PC-3 (cell line): ENCODE measurements at regions of chr5 and their contacts with region 1.

Region 1: GRCh38 chr5:151315998-151316597 is 12.5 kb upstream of the SLC36A3 start:
- DNase-seq: peak; percentile 93
- ATAC-seq: peak; percentile 89
- H3K4me3 ChIP-seq: no peak overlapping the region
- H3K27ac ChIP-seq: no peak overlapping the region
- H3K4me1 ChIP-seq: no peaks in the 10 kb centered on the region
- H3K27me3 ChIP-seq: no peaks in the 10 kb centered on the region
- CTCF ChIP-seq: peak; percentile 96

Region 2: GRCh38 chr5:151126199-151126645 is 189.9 kb before region 1 on chr5:
- CTCF ChIA-PET with region 1: interaction called, 11 read pairs
- POLR2A ChIA-PET with region 1: no interaction called
- intact Hi-C with region 1: no loop called
- DNase-seq: peak; percentile 64
- ATAC-seq: peak; percentile 70
- H3K4me3 ChIP-seq: no peak overlapping the region
- H3K27ac ChIP-seq: no peak overlapping the region
- H3K4me1 ChIP-seq: no peaks in the 10 kb centered on the region
- H3K27me3 ChIP-seq: no peaks in the 10 kb centered on the region
- CTCF ChIP-seq: peak; percentile 91

Region 3: DNA sequence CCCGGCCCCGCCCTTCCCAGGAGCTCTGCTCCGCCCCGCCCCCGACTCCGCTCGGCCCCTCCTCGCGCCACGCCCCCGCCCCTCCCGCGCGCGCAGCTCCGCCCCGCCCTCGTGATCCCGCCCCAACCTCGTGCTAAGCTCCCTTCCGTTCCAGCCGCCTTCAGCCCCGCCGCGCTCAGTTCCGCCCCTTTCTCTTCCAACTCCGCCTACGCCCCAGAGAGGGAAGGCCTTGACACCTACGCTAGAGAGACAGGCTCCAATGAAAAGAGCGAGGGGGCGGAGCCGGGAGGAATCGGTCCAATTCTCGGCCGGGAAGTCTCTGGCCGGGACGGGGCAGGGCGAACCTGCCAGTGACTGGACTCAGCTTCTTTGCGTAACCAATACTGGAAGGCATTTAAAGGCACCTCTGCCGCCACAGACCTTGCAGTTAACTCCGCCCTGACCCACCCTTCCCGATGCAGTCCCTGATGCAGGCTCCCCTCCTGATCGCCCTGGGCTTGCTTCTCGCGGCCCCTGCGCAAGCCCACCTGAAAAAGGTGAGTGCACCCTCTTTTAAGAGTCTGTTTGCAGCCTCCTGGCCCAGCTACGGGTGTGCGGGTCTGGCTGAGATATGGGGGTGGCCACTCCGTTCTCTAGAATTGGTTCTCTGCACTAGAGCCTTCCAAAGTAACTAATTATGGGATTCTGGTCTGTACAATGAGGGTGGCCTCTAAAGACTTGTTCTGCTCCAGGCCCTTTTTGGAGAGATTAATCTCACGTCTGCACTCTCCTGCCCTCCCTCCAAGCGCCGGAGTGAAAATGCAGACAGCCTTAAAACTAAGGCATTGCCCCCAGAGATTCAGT is 63.1 kb before region 1 on chr5 and contains the start of gene GM2A:
- CTCF ChIA-PET with region 1: interaction called, 17 read pairs
- POLR2A ChIA-PET with region 1: no interaction called
- intact Hi-C with region 1: loop called (anchors 5 kb)
- DNase-seq: peak; percentile 99
- ATAC-seq: peak; percentile 94
- H3K4me3 ChIP-seq: peak within 1 kb of the TSS; percentile 95
- H3K27ac ChIP-seq: peak within 1 kb of the TSS; percentile 25
- H3K4me1 ChIP-seq: peaks cover 32% of the 10 kb centered on the region
- H3K27me3 ChIP-seq: no peaks in the 10 kb centered on the region
- CTCF ChIP-seq: no peak
- total RNA-seq, gene GM2A: 78.3 and 90.2 TPM in 2 replicates

Region 4: GRCh38 chr5:151288180-151288579 is 27.9 kb before region 1 on chr5:
- CTCF ChIA-PET with region 1: interaction called, 11 read pairs
- POLR2A ChIA-PET with region 1: no interaction called
- intact Hi-C with region 1: loop called (anchors 1 kb)
- DNase-seq: peak; percentile 84
- ATAC-seq: peak; percentile 99
- H3K4me3 ChIP-seq: no peak overlapping the region
- H3K27ac ChIP-seq: peak overlapping the region; percentile 35; the same call in 1 of the 2 replicates
- H3K4me1 ChIP-seq: peaks cover 13% of the 10 kb centered on the region
- H3K27me3 ChIP-seq: no peaks in the 10 kb centered on the region
- CTCF ChIP-seq: peak; percentile 77

Region 5: GRCh38 chr5:151499501-151500035 is 183.5 kb after region 1 on chr5:
- CTCF ChIA-PET with region 1: no interaction called
- POLR2A ChIA-PET with region 1: no interaction called
- intact Hi-C with region 1: loop called (anchors 5 kb)
- DNase-seq: no peak
- ATAC-seq: no peak
- H3K4me3 ChIP-seq: no peak overlapping the region
- H3K27ac ChIP-seq: no peak overlapping the region
- H3K4me1 ChIP-seq: no peaks in the 10 kb centered on the region
- H3K27me3 ChIP-seq: no peaks in the 10 kb centered on the region
- CTCF ChIP-seq: no peak

Region 6: DNA sequence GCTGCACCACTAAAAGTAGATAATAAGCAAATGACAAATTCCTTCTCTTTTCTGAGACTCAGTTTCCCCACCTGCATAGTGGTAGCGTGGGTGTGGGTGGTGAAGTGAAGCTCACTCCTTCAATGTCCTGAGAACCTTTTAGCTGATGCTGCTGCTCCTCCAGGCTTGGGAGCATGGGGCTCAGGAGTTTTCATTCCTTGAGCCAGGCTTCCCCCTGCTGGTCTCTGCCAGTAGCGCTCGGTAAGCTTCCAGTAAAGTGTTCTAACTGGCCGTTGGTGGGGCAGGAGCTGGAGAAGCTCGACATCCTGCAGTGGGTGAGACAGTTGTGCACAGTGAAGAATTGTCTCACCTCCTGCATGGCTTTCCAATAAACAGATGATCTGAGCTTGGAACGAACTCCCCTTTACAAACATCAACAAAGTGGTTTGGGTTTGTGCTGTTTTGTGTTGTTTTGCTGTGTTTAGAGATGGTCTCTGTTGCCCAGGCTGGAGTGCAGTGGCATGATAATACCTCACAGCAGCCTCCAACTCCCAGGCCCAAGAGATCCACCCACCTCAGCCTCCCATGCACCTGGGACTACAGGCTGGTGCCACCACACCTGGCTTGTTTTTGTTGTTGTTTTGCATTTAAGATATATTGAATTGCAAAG is 336.0 kb after region 1 on chr5:
- CTCF ChIA-PET with region 1: interaction called, 4 read pairs
- POLR2A ChIA-PET with region 1: no interaction called
- intact Hi-C with region 1: loop called (anchors 2 kb)
- DNase-seq: peak; percentile 91
- ATAC-seq: peak; percentile 99
- H3K4me3 ChIP-seq: no peak overlapping the region
- H3K27ac ChIP-seq: no peak overlapping the region
- H3K4me1 ChIP-seq: peaks cover 9% of the 10 kb centered on the region; the same call in 1 of the 2 replicates
- H3K27me3 ChIP-seq: no peaks in the 10 kb centered on the region
- CTCF ChIP-seq: peak; percentile 96